Natural killer cell (primary cell): ENCODE measurements at regions of chr18 and their contacts with region 1.

Region 1: DNA sequence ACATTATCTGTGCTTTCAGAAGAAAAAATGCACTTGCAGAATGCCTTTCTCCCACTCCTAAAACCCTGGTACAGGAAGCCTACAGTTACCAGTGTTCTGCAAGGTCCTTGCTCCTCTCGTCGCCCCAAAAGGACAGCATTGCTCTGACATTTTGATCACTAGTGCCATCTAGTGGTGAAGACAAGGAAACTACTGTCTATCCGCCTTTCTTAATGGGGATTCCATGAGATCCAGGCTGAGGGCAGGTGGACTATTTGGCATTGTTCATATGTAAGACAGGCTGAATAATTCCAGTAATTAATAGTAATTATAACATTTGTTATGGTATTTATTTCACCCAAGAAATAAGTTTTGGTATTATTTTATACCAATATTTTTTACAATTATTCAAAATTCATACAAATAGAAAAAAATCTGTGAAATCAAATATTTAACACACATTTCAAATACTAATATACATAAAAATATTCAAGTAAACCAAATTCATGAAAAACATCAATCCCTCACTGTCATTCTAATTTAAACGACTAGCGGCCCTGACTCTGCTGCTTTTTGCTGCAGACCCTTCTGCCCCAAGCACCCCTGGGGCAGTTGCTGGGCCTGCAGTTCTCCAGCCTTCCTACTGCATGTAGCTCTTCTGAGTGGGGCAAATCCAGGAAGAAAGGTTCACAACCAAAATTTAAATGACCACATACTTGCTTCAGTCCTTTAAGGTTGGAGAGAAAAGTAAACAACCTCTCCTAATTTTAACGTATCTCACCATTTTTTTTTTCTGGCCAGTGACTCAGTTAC is 19.0 kb downstream of the TPGS2 start:
- DNase-seq: peak in 1 of 2 donors; percentile 79
- ATAC-seq: peak; percentile 85 to 98 (median 97)
- H3K4me3 ChIP-seq: no peak overlapping the region
- H3K4me3 Mint-ChIP-seq: no peak overlapping the region
- H3K27ac ChIP-seq: no peak overlapping the region
- H3K27ac Mint-ChIP-seq: no peak overlapping the region
- H3K4me1 ChIP-seq: no peaks in the 10 kb centered on the region
- H3K4me1 Mint-ChIP-seq: no peaks in the 10 kb centered on the region
- H3K27me3 ChIP-seq: no peaks in the 10 kb centered on the region
- H3K27me3 Mint-ChIP-seq: no peaks in the 10 kb centered on the region
- CTCF ChIP-seq: peak; percentile 83

Region 2: DNA sequence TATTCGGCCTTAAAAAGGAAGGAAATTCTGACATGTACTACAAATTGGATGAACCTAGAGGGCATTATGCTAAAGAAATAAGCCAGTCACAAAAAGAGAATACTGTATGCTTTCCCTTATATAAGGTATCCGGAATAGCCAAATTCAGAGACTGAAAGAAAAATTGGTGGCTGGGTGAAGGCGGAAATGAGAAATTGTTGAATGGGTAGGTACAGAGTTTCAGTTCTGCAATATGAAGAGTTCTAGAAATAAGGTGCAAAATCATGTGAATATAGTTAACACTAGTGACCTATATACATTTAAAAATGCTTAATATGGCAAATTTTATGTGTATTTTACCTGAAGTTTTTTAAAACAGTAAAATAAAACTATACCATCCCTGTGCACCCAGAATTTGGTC is 794.2 kb before region 1 on chr18:
- intact Hi-C with region 1: loop called (anchors 5 kb)
- DNase-seq: no peak
- ATAC-seq: no peak
- H3K4me3 ChIP-seq: no peak overlapping the region
- H3K4me3 Mint-ChIP-seq: no peak overlapping the region
- H3K27ac ChIP-seq: no peak overlapping the region
- H3K27ac Mint-ChIP-seq: no peak overlapping the region
- H3K4me1 ChIP-seq: no peaks in the 10 kb centered on the region
- H3K4me1 Mint-ChIP-seq: no peaks in the 10 kb centered on the region
- H3K27me3 ChIP-seq: no peaks in the 10 kb centered on the region
- H3K27me3 Mint-ChIP-seq: no peaks in the 10 kb centered on the region
- CTCF ChIP-seq: no peak

Region 3: DNA sequence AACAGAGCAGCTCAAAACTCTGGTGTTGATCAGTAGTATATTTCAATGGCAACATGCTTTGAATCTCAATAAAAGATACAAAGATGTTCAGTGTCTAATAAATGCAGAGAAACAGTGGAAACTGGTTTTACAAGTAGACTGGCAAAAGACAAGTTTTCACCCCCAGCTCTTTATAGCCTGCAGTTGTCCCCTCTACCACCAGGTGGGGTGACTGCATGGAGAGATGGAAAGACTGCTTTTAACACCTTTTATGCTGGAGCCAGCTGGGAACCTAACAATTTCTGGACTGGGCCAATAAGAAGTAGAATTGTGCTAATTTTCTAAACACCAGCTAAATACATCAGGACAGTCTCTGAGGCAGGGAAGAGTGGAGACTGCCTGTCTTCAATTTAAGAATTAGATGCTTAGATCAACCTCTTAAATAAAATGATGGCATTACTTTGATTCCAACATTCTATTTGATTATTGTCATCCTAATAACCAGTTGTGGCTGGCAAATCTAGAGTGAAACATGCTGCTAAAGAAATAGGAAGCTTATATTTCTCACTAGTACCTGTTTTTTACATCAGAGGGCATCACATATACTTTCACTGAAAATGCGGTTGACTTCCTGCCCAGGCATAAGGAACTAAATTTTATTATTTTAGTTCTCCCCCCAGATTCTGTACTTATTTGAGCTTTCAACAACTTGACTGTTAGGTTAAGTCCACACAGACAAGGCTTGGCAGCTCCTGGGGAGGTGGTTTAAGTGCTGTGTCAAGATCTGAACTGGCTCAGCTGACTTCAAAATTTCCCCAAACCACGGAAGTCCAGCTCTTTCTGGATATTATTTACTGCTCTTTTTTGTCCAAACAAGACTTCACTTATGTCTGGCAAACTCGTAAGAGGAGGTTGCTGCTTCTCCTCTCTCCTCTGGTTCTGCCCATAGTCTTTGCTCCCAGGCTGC is 121.5 kb before region 1 on chr18:
- intact Hi-C with region 1: loop called (anchors 1 kb)
- DNase-seq: peak in 1 of 2 donors; percentile 56
- ATAC-seq: peak in 1 of 3 donors; percentile 66
- H3K4me3 ChIP-seq: no peak overlapping the region
- H3K4me3 Mint-ChIP-seq: no peak overlapping the region
- H3K27ac ChIP-seq: no peak overlapping the region
- H3K27ac Mint-ChIP-seq: no peak overlapping the region
- H3K4me1 ChIP-seq: no peaks in the 10 kb centered on the region
- H3K4me1 Mint-ChIP-seq: no peaks in the 10 kb centered on the region
- H3K27me3 ChIP-seq: no peaks in the 10 kb centered on the region
- H3K27me3 Mint-ChIP-seq: peaks cover 2 to 8% of the 10 kb centered on the region in 2 donors
- CTCF ChIP-seq: peak; percentile 62